Activated T-helper 1 cell treated with anti-CD3 and anti-CD28 coated beads, Interleukin-12 subunit alpha, Interleukin-12 subunit beta, Interleukin-2, Interleukin-4 antibody, amounts not matched to agents 30 ng/mL and 10 ng/mL and 1 ng/mL, durations not matched to agents 14 hours and 24 hours and 36 hours (primary cell): ENCODE measurements at regions of chr22 and their contacts with region 1.

Region 1: GRCh38 chr22:25765801-25766200 is 23.8 kb downstream of the MYO18B start:
- DNase-seq: no peak
- H3K4me3 Mint-ChIP-seq: no peak overlapping the region
- H3K27ac Mint-ChIP-seq: no peak overlapping the region
- H3K4me1 Mint-ChIP-seq: peaks cover 28% of the 10 kb centered on the region
- H3K27me3 Mint-ChIP-seq: no peaks in the 10 kb centered on the region

Region 2: GRCh38 chr22:25645266-25645665 is 120.5 kb before region 1 on chr22:
- intact Hi-C with region 1: no loop called
- DNase-seq: no peak
- H3K4me3 Mint-ChIP-seq: no peak overlapping the region
- H3K27ac Mint-ChIP-seq: peak overlapping the region; percentile 45
- H3K4me1 Mint-ChIP-seq: peaks cover 32% of the 10 kb centered on the region
- H3K27me3 Mint-ChIP-seq: no peaks in the 10 kb centered on the region

Region 3: GRCh38 chr22:25736378-25737011 is 29.3 kb before region 1 on chr22:
- intact Hi-C with region 1: loop called (anchors 2 kb)
- DNase-seq: peak; percentile 71
- H3K4me3 Mint-ChIP-seq: peak overlapping the region; percentile 71
- H3K27ac Mint-ChIP-seq: peak overlapping the region; percentile 98
- H3K4me1 Mint-ChIP-seq: peaks cover 64% of the 10 kb centered on the region
- H3K27me3 Mint-ChIP-seq: peaks cover 2% of the 10 kb centered on the region